ENCODE measurements at regions of chr11 and their contacts with region 1.

Region 1: GRCh38 chr11:18802381-18803257 is 11.0 kb upstream of the PTPN5 start:
- DNase-seq: no peak

Region 2: DNA sequence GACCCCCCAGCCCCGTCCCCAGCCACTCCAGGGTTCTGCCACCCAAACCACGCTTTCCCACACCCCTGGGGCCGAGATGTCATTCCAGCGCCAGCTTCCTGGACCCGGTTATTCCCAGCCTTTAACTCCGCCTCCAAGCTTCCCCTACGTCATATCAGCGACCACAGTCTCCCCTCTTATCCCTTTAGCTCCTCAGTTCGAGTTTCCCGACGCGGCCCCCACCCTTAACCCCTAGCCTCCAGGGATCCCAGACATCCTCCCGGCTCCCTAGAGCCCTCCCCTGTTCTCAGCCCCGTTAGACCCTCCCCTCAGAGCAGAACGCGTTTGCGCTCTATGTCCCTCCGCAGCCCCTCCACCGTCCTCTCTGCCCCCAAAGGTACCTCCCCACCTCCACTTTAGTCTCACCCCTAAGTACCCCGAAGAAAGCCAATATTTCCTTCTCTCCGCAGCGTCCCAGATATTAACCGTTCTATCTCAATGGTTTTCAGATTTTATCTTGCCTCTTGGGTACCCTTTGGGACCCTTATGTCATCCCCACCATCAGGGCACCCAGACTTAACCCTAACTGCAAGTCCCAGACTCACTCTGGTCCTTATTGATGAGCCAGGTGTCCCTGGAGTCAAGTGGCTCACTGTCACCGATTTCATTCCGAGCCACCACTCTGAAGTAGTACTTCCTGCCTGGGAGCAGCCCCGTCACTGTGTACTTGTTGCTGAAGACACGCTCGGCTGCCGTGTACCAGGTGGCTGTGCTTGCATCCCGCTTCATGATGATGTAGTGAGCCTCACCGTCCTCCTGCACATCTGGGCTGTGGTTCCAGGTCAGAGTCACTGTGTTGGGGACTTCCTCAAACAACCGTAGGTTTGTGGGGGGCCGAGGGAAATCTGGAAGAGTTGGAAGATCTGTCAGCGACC is 96.0 kb before region 1 on chr11:
- intact Hi-C with region 1: no loop called
- DNase-seq: peak; percentile 87

Region 3: DNA sequence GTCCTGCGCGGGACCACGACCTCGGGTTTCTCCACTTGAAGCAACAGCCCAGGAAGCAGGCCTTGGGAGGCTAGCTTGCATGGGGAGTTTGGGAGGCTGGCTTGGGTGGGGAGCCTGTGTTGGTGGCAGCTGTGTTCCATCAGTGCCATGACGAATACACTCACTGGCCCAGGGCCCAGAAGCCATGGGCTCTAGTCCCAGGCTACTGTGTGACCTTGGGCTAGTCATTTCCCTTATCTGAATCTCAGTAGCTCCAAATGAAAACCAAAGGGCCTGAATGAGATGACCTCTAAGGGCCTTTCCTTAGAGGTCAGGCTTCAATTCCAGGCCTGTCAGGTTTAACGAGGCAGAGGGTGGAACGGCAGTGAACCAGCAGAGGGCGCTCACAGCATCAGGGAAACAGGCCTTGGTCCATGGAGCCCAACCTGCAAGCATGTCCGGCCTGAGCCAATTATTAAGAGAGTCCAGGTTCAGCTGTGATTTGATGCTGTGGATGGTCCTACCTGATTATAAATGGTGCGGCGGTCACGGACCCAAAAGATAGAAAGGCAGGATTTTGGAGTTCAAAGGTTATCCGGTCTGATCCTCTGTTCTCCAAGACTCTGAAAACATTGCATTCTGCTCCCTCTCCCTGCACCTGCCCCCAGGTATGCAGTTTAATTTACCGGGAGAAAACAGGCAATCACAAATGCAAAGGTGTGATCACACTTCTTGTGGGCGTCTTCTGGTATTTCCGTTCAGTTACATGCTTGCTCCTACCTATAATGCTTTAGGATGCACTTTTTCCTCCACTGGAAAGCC is 26.9 kb before region 1 on chr11:
- intact Hi-C with region 1: loop called in 1 of 2 experiments (anchors 1 kb)
- DNase-seq: no peak

Region 4: DNA sequence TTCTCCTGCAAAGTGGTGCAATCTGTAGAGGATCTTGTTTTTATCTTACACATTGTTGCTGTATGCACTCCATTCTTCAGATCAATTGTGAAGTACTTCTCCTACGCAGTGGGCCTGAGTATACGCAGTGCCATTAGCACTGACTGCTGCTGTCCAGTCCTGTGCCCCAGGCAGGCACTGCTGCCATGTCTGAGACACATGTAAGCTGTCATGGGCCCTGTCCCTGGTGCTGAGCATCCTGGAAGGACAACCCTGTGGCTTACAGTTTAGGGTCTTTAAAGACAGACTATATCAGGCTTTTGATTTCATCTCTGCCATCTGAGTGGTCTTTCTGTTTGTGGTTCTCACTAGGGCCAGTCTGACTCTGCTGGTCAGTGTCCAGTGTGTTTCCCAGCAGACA is 33.8 kb after region 1 on chr11:
- intact Hi-C with region 1: no loop called
- DNase-seq: no peak

Region 5: GRCh38 chr11:18865951-18866350 is 63.3 kb after region 1 on chr11:
- intact Hi-C with region 1: loop called in 1 of 2 experiments (anchors 2 kb)
- DNase-seq: no peak